AG04450 (cell line): ENCODE measurements at regions of chr4 and their contacts with region 1.

Region 1: DNA sequence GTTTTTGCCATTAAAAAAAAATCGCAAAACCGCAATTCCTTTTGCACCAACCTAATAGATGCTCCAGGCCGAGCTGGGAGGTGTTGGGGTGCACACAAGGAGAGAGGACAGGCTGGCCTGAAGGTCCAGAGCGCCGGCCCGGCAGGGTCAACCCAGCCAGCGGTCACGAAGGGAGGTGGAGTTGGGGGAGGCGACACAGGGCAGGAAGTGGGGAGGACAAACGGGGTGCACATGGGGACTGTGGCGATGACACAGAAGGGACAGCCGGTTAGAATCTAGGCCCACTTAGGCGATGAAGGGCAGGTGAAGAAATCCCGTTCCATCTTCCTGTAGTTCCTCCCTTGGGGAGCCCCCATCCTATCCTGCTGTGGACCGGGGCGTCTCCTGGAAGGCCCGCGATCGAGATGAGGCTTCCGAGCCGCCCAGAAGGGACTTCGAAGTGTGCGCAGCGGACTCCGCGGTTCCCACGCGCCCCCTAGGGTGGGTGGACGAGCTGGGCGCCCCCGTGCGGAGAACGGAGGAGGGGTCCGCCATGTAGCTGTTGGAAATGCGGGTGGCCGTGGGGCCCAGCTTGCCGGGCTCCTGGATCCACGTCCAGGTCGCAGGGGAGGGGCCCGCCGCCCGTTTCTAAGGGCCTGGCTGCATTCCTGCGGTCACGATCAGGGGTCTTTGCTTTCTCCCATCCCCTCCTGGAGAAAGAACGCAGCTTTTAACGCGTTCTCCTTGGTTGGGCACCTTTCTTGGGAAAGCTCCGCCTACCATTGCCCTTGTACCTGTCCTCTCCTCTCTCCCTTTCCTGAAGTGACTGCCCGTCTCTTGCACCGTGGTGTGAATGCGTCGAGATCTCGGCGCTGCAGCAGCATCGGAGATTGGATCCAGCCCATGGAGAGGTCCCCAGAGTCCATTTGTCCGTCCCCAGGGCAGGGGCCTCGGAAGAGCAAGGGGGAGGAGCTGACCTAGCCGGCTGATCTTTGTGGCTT is 17.0 kb upstream of the HPF1 start:
- DNase-seq: no peak
- H3K4me3 ChIP-seq: peak overlapping the region; percentile 7; the same call in 1 of the 2 replicates
- H3K27ac ChIP-seq: no peak overlapping the region
- H3K27me3 ChIP-seq: peaks cover 24% of the 10 kb centered on the region
- CTCF ChIP-seq: peak; percentile 42

Region 2: DNA sequence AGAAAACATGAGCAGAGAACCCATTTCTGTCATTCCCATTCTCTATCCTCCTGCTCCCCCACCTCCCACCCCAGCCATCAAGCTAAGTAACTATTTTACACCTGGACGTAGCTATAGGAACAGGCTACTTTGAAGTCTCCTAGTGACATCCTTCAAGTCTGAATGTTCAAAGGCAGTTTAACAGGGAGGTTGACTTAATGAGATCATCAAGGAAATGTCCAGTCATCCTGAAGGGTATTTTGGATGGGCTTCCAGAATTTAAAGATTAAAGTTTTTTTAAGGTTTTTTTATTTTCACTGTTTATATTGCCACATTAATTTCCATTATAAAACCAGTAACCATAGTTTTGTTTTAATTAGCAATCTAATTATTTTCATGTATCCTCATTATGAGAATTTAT is 58.1 kb before region 1 on chr4:
- CTCF ChIA-PET with region 1: no interaction called
- POLR2A ChIA-PET with region 1: no interaction called
- DNase-seq: no peak
- H3K4me3 ChIP-seq: no peak overlapping the region
- H3K27ac ChIP-seq: no peak overlapping the region
- H3K27me3 ChIP-seq: no peaks in the 10 kb centered on the region
- CTCF ChIP-seq: no peak

Region 3: GRCh38 chr4:169727616-169728015 is 47.1 kb before region 1 on chr4:
- CTCF ChIA-PET with region 1: no interaction called
- POLR2A ChIA-PET with region 1: no interaction called
- DNase-seq: no peak
- H3K4me3 ChIP-seq: no peak overlapping the region
- H3K27ac ChIP-seq: no peak overlapping the region
- H3K27me3 ChIP-seq: no peaks in the 10 kb centered on the region
- CTCF ChIP-seq: no peak

Region 4: GRCh38 chr4:169791527-169792156 is 16.9 kb after region 1 on chr4:
- CTCF ChIA-PET with region 1: interaction called, 14 read pairs
- POLR2A ChIA-PET with region 1: no interaction called
- DNase-seq: no peak
- H3K4me3 ChIP-seq: peak overlapping the region; percentile 48
- H3K27ac ChIP-seq: no peak overlapping the region
- H3K27me3 ChIP-seq: peaks cover 10% of the 10 kb centered on the region
- CTCF ChIP-seq: peak; percentile 66